ENCODE measurements at regions of chr2 and their contacts with region 1.

Region 1: DNA sequence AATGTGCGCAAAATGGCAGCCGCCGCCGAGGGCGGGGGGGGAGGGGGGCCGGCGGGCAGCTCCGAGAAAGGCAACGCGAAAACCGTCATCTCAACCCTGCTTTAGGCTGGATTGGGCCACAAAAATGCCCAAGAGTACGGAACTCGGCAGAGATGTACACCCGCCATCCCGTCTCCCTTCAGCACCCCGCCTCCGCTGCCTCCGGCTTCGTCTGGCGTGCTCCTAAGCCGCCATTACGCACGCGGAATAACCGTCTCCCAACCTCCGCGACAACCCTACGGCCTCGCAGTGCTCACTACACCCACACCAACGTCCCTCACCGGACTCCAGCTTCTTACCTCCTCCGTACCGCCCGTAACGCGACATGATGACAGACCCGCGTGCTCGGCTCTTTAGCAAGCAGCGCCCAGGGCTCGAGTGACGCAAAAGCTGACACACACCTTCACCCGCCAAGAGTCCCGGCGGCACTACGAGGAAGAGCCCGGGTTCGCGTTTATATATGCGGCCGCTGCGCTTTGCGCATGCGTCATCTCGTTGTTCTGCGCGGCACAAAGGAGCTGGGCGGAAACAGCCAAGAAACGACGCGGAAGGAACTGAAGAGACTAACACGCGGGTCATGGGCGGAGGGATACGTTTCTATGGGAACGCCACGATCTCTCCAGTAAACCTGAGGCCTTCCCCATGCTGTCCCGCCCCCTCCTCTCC is at the start of gene SRSF7:
- DNase-seq: peak; percentile 99
- ATAC-seq: peak; percentile 77
- H3K4me3 ChIP-seq: peak within 1 kb of the TSS; percentile 78 to 100 (median 98)
- H3K4me3 Mint-ChIP-seq: peak within 1 kb of the TSS; percentile 99
- H3K27ac ChIP-seq: peak within 1 kb of the TSS; percentile 98 to 99
- H3K27ac Mint-ChIP-seq: peak within 1 kb of the TSS; percentile 99
- H3K4me1 ChIP-seq: peaks cover 39 to 46% of the 10 kb centered on the region in 2 donors
- H3K4me1 Mint-ChIP-seq: peaks cover 54% of the 10 kb centered on the region
- H3K27me3 ChIP-seq: no peaks in the 10 kb centered on the region
- H3K27me3 Mint-ChIP-seq: no peaks in the 10 kb centered on the region
- CTCF ChIP-seq: no peak
- total RNA-seq, gene SRSF7: 280 and 283 TPM in 2 replicates

Region 2: GRCh38 chr2:38602732-38603401 is 148.2 kb before region 1 on chr2 and contains the start of gene HNRNPLL:
- CTCF ChIA-PET with region 1: interaction called, 8 read pairs
- POLR2A ChIA-PET with region 1: interaction called, 6 read pairs
- intact Hi-C with region 1: loop called (anchors 1 kb)
- DNase-seq: peak; percentile 89
- ATAC-seq: peak; percentile 86
- H3K4me3 ChIP-seq: peak within 1 kb of the TSS; percentile 71 to 83 (median 81)
- H3K4me3 Mint-ChIP-seq: peak within 1 kb of the TSS; percentile 93
- H3K27ac ChIP-seq: peak within 1 kb of the TSS in 1 of 2 donors; percentile 38
- H3K27ac Mint-ChIP-seq: peak within 1 kb of the TSS; percentile 86
- H3K4me1 ChIP-seq: peaks cover 13 to 27% of the 10 kb centered on the region in 2 donors
- H3K4me1 Mint-ChIP-seq: peaks cover 22% of the 10 kb centered on the region
- H3K27me3 ChIP-seq: peaks cover 0 to 52% (median 32%) of the 10 kb centered on the region in 4 experiments
- H3K27me3 Mint-ChIP-seq: peaks cover 35% of the 10 kb centered on the region
- CTCF ChIP-seq: no peak
- total RNA-seq, gene HNRNPLL: 5.8 and 6.7 TPM in 2 replicates

Region 3: DNA sequence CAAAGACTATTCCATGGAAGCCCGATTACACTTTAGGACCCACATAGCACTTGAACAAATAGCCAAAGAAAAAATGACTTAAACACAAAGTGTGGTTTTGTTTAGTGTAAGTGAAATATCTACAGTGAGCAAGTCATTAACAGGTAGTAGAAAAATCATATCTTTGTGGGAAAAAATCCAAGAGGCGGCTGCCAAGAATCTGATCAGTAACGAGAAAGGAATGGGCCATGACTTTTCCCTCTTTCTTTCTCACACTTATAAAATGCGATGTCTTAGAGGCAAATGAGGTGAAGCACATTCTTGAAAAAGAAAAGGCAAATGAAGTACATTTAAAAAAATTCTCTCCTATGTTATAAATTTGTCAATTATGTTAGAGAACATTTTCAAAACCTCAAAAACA is 14.1 kb after region 1 on chr2:
- CTCF ChIA-PET with region 1: no interaction called
- POLR2A ChIA-PET with region 1: no interaction called
- intact Hi-C with region 1: no loop called
- DNase-seq: no peak
- ATAC-seq: no peak
- H3K4me3 ChIP-seq: no peak overlapping the region
- H3K4me3 Mint-ChIP-seq: no peak overlapping the region
- H3K27ac ChIP-seq: no peak overlapping the region
- H3K27ac Mint-ChIP-seq: no peak overlapping the region
- H3K4me1 ChIP-seq: no peaks in the 10 kb centered on the region
- H3K4me1 Mint-ChIP-seq: no peaks in the 10 kb centered on the region
- H3K27me3 ChIP-seq: no peaks in the 10 kb centered on the region
- H3K27me3 Mint-ChIP-seq: no peaks in the 10 kb centered on the region
- CTCF ChIP-seq: no peak

Region 4: DNA sequence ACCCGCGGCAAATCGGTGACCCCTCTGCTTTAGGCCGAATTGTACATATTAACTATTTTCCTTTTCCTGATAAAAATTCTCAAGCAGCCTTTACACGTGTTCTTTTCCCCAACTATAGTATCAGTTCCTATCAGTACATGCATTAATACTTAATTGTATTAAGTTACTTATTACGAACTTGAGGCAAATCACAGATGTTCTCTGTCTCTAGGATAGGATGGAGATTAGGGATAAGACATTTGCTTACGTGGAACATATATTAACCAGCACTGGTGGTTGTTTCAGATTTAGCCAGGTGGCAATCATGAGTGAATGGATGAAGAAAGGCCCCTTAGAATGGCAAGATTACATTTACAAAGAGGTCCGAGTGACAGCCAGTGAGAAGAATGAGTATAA is 27.6 kb after region 1 on chr2:
- CTCF ChIA-PET with region 1: interaction called, 3 read pairs
- POLR2A ChIA-PET with region 1: interaction called, 10 read pairs
- intact Hi-C with region 1: loop called (anchors 1 kb)
- DNase-seq: no peak
- ATAC-seq: no peak
- H3K4me3 ChIP-seq: peak overlapping the region; percentile 52 to 95 (median 81)
- H3K4me3 Mint-ChIP-seq: peak overlapping the region; percentile 98
- H3K27ac ChIP-seq: peak overlapping the region; percentile 31 to 82
- H3K27ac Mint-ChIP-seq: peak overlapping the region; percentile 95
- H3K4me1 ChIP-seq: peaks cover 6 to 10% of the 10 kb centered on the region in 2 donors
- H3K4me1 Mint-ChIP-seq: peaks cover 11% of the 10 kb centered on the region
- H3K27me3 ChIP-seq: peaks cover 0 to 3% (median 0%) of the 10 kb centered on the region in 4 experiments
- H3K27me3 Mint-ChIP-seq: peaks cover 17% of the 10 kb centered on the region
- CTCF ChIP-seq: no peak

Region 5: GRCh38 chr2:38797276-38797675 is 46.2 kb after region 1 on chr2:
- CTCF ChIA-PET with region 1: no interaction called
- POLR2A ChIA-PET with region 1: no interaction called
- intact Hi-C with region 1: no loop called
- DNase-seq: no peak
- ATAC-seq: no peak
- H3K4me3 ChIP-seq: no peak overlapping the region
- H3K4me3 Mint-ChIP-seq: no peak overlapping the region
- H3K27ac ChIP-seq: no peak overlapping the region
- H3K27ac Mint-ChIP-seq: no peak overlapping the region
- H3K4me1 ChIP-seq: no peaks in the 10 kb centered on the region
- H3K4me1 Mint-ChIP-seq: no peaks in the 10 kb centered on the region
- H3K27me3 ChIP-seq: no peaks in the 10 kb centered on the region
- H3K27me3 Mint-ChIP-seq: no peaks in the 10 kb centered on the region
- CTCF ChIP-seq: no peak

Region 6: GRCh38 chr2:38835015-38835601 is 84.1 kb after region 1 on chr2:
- CTCF ChIA-PET with region 1: no interaction called
- POLR2A ChIA-PET with region 1: interaction called, 8 read pairs
- intact Hi-C with region 1: loop called (anchors 2 kb)
- DNase-seq: peak; percentile 8
- ATAC-seq: no peak
- H3K4me3 ChIP-seq: no peak overlapping the region
- H3K4me3 Mint-ChIP-seq: no peak overlapping the region
- H3K27ac ChIP-seq: peak overlapping the region; percentile 30 to 72
- H3K27ac Mint-ChIP-seq: peak overlapping the region; percentile 94
- H3K4me1 ChIP-seq: peaks cover 44 to 50% of the 10 kb centered on the region in 2 donors
- H3K4me1 Mint-ChIP-seq: peaks cover 39% of the 10 kb centered on the region
- H3K27me3 ChIP-seq: no peaks in the 10 kb centered on the region
- H3K27me3 Mint-ChIP-seq: no peaks in the 10 kb centered on the region
- CTCF ChIP-seq: peak; percentile 19

Region 7: GRCh38 chr2:39124000-39124745 is 373.1 kb after region 1 on chr2:
- CTCF ChIA-PET with region 1: no interaction called
- POLR2A ChIA-PET with region 1: interaction called, 4 read pairs
- intact Hi-C with region 1: loop called (anchors 2 kb)
- DNase-seq: peak; percentile 97
- ATAC-seq: peak; percentile 73
- H3K4me3 ChIP-seq: peak overlapping the region; percentile 72 to 96 (median 85)
- H3K4me3 Mint-ChIP-seq: peak overlapping the region; percentile 86
- H3K27ac ChIP-seq: peak overlapping the region; percentile 87 to 94
- H3K27ac Mint-ChIP-seq: peak overlapping the region; percentile 86
- H3K4me1 ChIP-seq: peaks cover 42 to 43% of the 10 kb centered on the region in 2 donors
- H3K4me1 Mint-ChIP-seq: peaks cover 54% of the 10 kb centered on the region
- H3K27me3 ChIP-seq: no peaks in the 10 kb centered on the region
- H3K27me3 Mint-ChIP-seq: no peaks in the 10 kb centered on the region
- CTCF ChIP-seq: peak; percentile 82

Measured in B cell (primary cell).